Panc1 (cell line): ENCODE measurements at regions of chr19 and their contacts with region 1.

Region 1: DNA sequence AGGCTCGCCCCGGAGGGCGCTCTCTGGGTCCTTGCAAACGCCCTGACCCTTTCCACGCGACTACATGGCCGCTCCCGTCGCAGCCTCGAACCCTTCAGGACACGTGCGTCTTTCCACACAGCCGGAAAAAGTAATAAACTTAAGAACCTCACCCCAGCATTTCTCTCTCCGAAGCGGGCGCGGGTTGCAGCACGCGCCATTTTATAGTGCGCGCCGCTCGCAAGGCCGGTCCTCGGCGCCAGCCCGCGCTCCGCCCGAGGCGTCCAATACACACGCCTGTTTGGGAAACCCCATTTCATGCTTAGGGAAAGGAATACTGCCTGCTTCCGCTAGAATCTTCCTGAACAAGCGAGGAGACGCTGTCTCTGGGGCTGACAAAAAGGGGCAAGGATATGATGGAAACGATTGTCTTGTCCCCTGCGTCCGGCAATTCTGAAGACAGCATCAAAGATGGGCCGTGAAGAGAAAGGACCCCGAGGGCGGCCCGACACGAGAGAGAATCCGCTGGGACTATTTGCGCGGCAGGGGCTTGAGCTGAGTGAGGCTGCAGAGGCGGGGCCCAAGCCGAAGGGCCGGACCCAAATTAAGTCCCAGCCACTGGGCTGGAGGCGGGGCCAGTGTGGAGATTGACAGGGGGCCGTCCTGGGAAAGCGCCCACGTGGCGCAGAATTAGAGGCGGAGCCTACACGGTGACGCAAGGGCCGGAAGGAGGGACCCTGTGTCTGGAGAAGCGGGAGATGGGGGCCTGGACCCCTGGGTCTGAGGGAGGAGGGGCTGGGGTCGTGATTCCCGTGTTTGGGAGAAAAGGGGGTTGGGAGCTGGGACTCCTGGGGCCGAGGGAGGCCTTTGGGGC is 14.4 kb downstream of the ACP4 start:
- DNase-seq: peak; percentile 78
- ATAC-seq: peak; percentile 96
- H3K4me3 ChIP-seq: peak overlapping the region; percentile 85 to 89
- H3K27ac ChIP-seq: peak overlapping the region; percentile 94
- H3K4me1 ChIP-seq: peaks cover 8% of the 10 kb centered on the region
- H3K27me3 ChIP-seq: no peaks in the 10 kb centered on the region
- CTCF ChIP-seq: no peak

Region 2: DNA sequence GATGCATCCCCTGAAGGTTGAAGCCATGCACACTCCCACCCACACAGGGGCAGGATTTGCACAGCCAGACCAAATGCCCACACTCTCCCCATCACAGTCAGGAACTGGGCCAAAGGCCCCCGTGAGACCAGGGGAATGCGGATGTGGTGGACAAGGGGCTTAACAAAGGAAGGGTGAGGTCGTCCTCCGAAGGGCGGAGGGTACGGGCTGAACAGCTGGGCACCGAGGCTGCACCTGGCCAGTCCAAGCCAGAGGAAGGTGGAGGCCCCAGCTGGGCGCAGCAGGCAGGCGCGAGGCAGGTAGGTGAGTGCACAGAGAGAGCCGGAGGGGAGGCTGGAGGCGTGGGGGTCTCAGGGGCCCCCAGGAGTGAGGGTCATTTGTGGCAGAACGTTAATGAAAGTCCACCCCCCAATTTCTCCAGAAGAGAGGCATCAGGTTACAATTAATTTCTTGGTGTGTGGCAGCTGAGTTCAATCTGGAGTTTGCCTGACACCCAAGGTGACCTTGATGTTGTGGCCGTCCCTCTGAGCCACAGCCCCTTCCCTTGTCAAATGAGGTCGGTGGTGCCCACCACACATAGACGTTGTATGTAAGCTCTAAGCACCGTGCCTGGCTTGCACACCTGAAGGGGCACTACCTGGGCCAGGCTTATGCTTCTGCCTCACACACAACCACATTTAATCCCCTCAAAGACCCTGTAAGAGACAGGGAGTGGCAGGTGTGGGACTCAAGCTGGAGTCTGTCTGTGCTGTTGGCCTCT is 25.8 kb after region 1 on chr19:
- CTCF ChIA-PET with region 1: no interaction called
- POLR2A ChIA-PET with region 1: no interaction called
- in situ Hi-C with region 1: no loop called
- intact Hi-C with region 1: no loop called
- DNase-seq: no peak
- ATAC-seq: no peak
- H3K4me3 ChIP-seq: no peak overlapping the region
- H3K27ac ChIP-seq: no peak overlapping the region
- H3K4me1 ChIP-seq: no peaks in the 10 kb centered on the region
- H3K27me3 ChIP-seq: no peaks in the 10 kb centered on the region
- CTCF ChIP-seq: no peak

Region 3: GRCh38 chr19:50851620-50852019 is 47.0 kb after region 1 on chr19:
- CTCF ChIA-PET with region 1: no interaction called
- POLR2A ChIA-PET with region 1: no interaction called
- in situ Hi-C with region 1: no loop called
- intact Hi-C with region 1: no loop called
- DNase-seq: no peak
- ATAC-seq: no peak
- H3K4me3 ChIP-seq: no peak overlapping the region
- H3K27ac ChIP-seq: no peak overlapping the region
- H3K4me1 ChIP-seq: no peaks in the 10 kb centered on the region
- H3K27me3 ChIP-seq: no peaks in the 10 kb centered on the region; the same call in none of the 2 replicates
- CTCF ChIP-seq: no peak

Region 4: DNA sequence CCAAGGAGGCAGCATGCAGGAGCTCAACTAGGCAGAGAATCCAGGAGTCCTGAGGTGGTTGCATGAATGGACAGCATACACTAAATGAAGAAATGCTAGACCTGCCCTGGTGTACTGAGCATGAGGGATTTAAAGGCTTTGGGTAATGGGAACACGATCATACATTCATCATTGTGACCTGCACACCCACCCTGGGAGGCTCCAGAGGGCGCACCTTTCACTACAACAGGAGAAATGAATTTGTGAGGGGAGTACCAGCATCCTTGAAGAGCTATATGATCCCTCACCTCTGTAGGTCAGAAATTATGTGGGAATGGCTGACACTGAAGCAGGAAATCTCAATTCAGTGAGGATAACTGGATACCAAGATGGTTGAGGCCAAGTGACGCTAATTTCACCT is 77.5 kb after region 1 on chr19:
- CTCF ChIA-PET with region 1: no interaction called
- POLR2A ChIA-PET with region 1: interaction called, 10 read pairs
- in situ Hi-C with region 1: no loop called
- intact Hi-C with region 1: no loop called
- DNase-seq: no peak
- ATAC-seq: no peak
- H3K4me3 ChIP-seq: no peak overlapping the region
- H3K27ac ChIP-seq: no peak overlapping the region
- H3K4me1 ChIP-seq: no peaks in the 10 kb centered on the region
- H3K27me3 ChIP-seq: peaks cover 8% of the 10 kb centered on the region; the same call in 1 of the 2 replicates
- CTCF ChIP-seq: peak; percentile 15; the same call in 1 of the 2 replicates